Activated T-helper 1 cell treated with anti-CD3 and anti-CD28 coated beads, Interleukin-12 subunit alpha, Interleukin-12 subunit beta, Interleukin-2, Interleukin-4 antibody, amounts not matched to agents 30 ng/mL and 10 ng/mL and 1 ng/mL, durations not matched to agents 14 hours and 24 hours and 36 hours (primary cell): ENCODE measurements at regions of chr6 and their contacts with region 1.

Region 1: GRCh38 chr6:105992315-105992961 is 93.7 kb upstream of the PRDM1 start:
- DNase-seq: peak; percentile 91
- H3K4me3 Mint-ChIP-seq: peak overlapping the region; percentile 89
- H3K27ac Mint-ChIP-seq: peak overlapping the region; percentile 96
- H3K4me1 Mint-ChIP-seq: peaks cover 66% of the 10 kb centered on the region
- H3K27me3 Mint-ChIP-seq: peaks cover 24% of the 10 kb centered on the region

Region 2: DNA sequence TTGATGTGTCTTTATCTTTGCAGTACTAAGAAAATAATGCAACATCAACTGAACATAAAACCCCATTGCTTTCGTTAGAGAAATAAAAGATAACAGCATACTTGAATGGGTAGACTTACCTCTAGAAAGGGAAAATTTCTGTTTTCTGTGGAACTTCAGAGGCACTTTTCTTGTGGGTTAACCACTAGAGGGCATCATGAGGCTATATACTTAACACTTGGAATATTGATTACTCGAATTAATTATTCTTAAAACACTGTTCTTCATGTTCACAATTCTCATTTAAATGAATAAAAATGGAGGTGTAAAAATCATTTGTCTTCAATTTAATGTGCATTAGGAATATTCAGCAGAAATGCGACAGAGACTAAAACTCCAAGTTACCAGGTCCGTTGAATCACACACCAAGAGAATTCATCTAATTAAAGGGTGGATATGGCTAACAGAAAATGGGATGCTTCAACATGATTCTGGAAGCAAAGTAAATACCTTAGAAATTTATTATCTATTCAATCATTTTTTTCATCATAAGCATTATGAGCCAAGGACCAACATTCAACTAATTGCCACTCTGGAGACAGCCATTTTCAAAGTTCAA is 258.8 kb before region 1 on chr6:
- intact Hi-C with region 1: loop called (anchors 2 kb)
- DNase-seq: no peak
- H3K4me3 Mint-ChIP-seq: no peak overlapping the region
- H3K27ac Mint-ChIP-seq: no peak overlapping the region
- H3K4me1 Mint-ChIP-seq: peaks cover 44% of the 10 kb centered on the region
- H3K27me3 Mint-ChIP-seq: peaks cover 3% of the 10 kb centered on the region

Region 3: GRCh38 chr6:105793130-105793529 is 199.3 kb before region 1 on chr6:
- intact Hi-C with region 1: loop called (anchors 2 kb)
- DNase-seq: no peak
- H3K4me3 Mint-ChIP-seq: peak overlapping the region; percentile 5
- H3K27ac Mint-ChIP-seq: peak overlapping the region; percentile 66
- H3K4me1 Mint-ChIP-seq: peaks cover 86% of the 10 kb centered on the region
- H3K27me3 Mint-ChIP-seq: no peaks in the 10 kb centered on the region

Region 4: GRCh38 chr6:105981002-105981887 is 11.2 kb before region 1 on chr6:
- intact Hi-C with region 1: loop called (anchors 1 kb)
- DNase-seq: peak; percentile 48
- H3K4me3 Mint-ChIP-seq: peak overlapping the region; percentile 84
- H3K27ac Mint-ChIP-seq: peak overlapping the region; percentile 91
- H3K4me1 Mint-ChIP-seq: peaks cover 79% of the 10 kb centered on the region
- H3K27me3 Mint-ChIP-seq: no peaks in the 10 kb centered on the region

Region 5: GRCh38 chr6:106085984-106086813 is 93.8 kb after region 1 on chr6 and contains the start of gene PRDM1:
- intact Hi-C with region 1: loop called (anchors 2 kb)
- DNase-seq: peak; percentile 83
- H3K4me3 Mint-ChIP-seq: peak within 1 kb of the TSS; percentile 96
- H3K27ac Mint-ChIP-seq: peak within 1 kb of the TSS; percentile 80
- H3K4me1 Mint-ChIP-seq: peaks cover 86% of the 10 kb centered on the region
- H3K27me3 Mint-ChIP-seq: peaks cover 7% of the 10 kb centered on the region
- total RNA-seq, gene PRDM1: 74.1 and 78.8 TPM in 2 replicates

Region 6: DNA sequence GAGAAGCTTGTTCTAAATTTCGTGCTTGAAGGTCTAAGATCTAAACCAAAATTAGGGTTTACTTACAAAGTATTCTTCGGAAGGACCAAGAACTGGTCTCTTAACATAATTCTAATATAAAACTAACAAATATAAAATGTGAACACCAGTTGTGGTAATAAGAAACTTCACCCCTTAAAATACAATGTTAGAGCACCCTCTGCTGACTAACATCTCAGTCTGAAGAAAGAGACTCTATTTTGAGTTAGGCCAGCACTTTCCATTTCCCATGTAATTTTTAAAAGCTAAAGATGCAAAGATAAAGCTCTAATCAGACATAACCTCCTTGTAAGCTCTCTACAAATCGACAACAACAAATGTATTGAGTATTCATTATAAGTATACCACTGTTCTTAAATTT is 308.5 kb after region 1 on chr6:
- intact Hi-C with region 1: loop called (anchors 1 kb)
- DNase-seq: no peak
- H3K4me3 Mint-ChIP-seq: no peak overlapping the region
- H3K27ac Mint-ChIP-seq: no peak overlapping the region
- H3K4me1 Mint-ChIP-seq: peaks cover 14% of the 10 kb centered on the region
- H3K27me3 Mint-ChIP-seq: no peaks in the 10 kb centered on the region

Region 7: GRCh38 chr6:106702451-106703110 is 710.1 kb after region 1 on chr6:
- intact Hi-C with region 1: no loop called
- DNase-seq: no peak
- H3K4me3 Mint-ChIP-seq: no peak overlapping the region
- H3K27ac Mint-ChIP-seq: peak overlapping the region; percentile 4
- H3K4me1 Mint-ChIP-seq: no peaks in the 10 kb centered on the region
- H3K27me3 Mint-ChIP-seq: peaks cover 17% of the 10 kb centered on the region